ENCODE measurements at regions of chr18 and their contacts with region 1.

Region 1: GRCh38 chr18:23131693-23132319 is 3.5 kb upstream of the CABLES1 start:
- DNase-seq: peak in 1 of 2 donors; percentile 81
- ATAC-seq: peak in 7 of 8 donors; percentile 48 to 76 (median 70)
- H3K4me3 ChIP-seq: no peak overlapping the region
- H3K27ac ChIP-seq: no peak overlapping the region
- H3K4me1 ChIP-seq: peaks cover 4 to 39% (median 16%) of the 10 kb centered on the region in 9 donors
- H3K27me3 ChIP-seq: peaks cover 0 to 48% (median 38%) of the 10 kb centered on the region in 7 donors
- CTCF ChIP-seq: peak; percentile 68 to 89 (median 85)

Region 2: GRCh38 chr18:22609642-22610041 is 522.2 kb before region 1 on chr18:
- intact Hi-C with region 1: no loop called
- DNase-seq: peak; percentile 66 to 86
- ATAC-seq: peak; percentile 47 to 84 (median 63)
- H3K4me3 ChIP-seq: no peak overlapping the region
- H3K27ac ChIP-seq: peak overlapping the region in 9 of 10 donors; percentile 1 to 79 (median 57)
- H3K4me1 ChIP-seq: peaks cover 0 to 60% (median 29%) of the 10 kb centered on the region in 9 donors
- H3K27me3 ChIP-seq: no peaks in the 10 kb centered on the region
- CTCF ChIP-seq: no peak

Region 3: GRCh38 chr18:23020555-23021294 is 111.1 kb before region 1 on chr18:
- intact Hi-C with region 1: no loop called
- DNase-seq: no peak
- ATAC-seq: no peak
- H3K4me3 ChIP-seq: no peak overlapping the region
- H3K27ac ChIP-seq: peak overlapping the region in 1 of 10 donors; percentile 33
- H3K4me1 ChIP-seq: peaks cover 0 to 8% (median 0%) of the 10 kb centered on the region in 9 donors
- H3K27me3 ChIP-seq: no peaks in the 10 kb centered on the region
- CTCF ChIP-seq: no peak

Region 4: DNA sequence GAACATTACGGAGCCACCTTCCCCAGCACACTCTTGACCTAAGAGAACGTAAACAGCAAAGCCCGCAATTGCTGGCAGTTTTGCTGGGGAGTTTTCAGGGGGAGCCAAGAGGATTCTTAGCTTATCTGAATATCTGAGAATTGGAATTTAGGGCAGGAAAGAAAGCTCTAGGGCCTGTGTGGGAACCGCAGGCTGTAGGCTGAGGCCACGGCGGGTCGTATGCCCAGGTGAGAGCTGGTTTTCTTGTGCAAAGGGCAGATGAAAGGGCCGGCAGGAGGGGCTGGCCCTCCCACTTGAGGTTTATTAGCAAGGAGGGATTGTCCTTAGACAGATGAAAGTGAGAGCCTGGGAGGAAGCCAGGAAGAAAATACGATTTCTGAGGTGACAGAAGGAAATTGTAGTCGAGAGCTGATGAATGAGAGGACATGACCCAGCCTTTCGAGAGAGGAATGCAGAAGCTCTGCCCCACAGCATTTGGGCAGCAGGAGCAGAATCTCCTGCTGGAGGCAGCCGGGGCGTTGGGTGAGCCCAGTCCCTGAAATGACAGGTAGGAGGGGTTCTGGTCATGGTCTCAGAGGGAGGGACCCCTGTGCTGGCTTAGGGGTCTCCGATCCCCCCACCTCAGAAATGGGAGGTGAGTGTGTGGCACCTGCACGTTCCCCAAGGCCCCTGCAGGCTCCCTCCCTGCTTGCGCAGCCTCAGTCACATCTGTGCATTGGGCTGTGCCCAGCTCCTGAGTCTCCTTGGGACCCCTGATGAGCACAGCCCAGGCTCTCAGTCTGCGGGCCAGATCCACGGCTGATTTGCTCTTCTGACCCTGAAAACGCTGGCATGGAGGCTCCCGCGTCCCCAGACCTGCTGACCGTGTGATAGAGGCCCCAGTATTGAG is 64.6 kb after region 1 on chr18:
- intact Hi-C with region 1: loop called in 1 of 10 experiments (anchors 5 kb)
- DNase-seq: no peak
- ATAC-seq: no peak
- H3K4me3 ChIP-seq: no peak overlapping the region
- H3K27ac ChIP-seq: peak overlapping the region in 1 of 10 donors; percentile 5
- H3K4me1 ChIP-seq: peaks cover 0 to 32% (median 27%) of the 10 kb centered on the region in 9 donors
- H3K27me3 ChIP-seq: no peaks in the 10 kb centered on the region
- CTCF ChIP-seq: no peak

Region 5: DNA sequence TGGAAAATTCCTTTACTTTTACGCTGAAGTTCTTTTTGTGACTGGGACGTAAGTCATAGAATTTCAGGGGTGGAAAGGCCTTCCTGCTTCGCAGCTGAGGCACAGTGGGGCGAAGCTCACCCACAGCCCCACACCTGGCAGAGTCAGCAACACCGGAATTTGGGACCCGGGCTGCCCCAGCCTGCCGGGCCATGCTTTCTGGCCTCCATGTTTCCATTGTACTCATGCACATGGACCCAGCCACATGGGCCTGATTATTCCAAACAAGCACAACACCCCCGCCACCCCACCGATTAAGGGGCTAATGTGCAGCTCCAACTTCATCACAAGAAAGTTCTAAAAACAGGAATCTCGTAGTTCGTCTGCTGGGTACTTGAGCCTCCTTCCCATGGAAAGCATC is 86.0 kb after region 1 on chr18:
- intact Hi-C with region 1: no loop called
- DNase-seq: no peak
- ATAC-seq: no peak
- H3K4me3 ChIP-seq: no peak overlapping the region
- H3K27ac ChIP-seq: no peak overlapping the region
- H3K4me1 ChIP-seq: peaks cover 0 to 16% (median 5%) of the 10 kb centered on the region in 9 donors
- H3K27me3 ChIP-seq: no peaks in the 10 kb centered on the region
- CTCF ChIP-seq: no peak

Region 6: DNA sequence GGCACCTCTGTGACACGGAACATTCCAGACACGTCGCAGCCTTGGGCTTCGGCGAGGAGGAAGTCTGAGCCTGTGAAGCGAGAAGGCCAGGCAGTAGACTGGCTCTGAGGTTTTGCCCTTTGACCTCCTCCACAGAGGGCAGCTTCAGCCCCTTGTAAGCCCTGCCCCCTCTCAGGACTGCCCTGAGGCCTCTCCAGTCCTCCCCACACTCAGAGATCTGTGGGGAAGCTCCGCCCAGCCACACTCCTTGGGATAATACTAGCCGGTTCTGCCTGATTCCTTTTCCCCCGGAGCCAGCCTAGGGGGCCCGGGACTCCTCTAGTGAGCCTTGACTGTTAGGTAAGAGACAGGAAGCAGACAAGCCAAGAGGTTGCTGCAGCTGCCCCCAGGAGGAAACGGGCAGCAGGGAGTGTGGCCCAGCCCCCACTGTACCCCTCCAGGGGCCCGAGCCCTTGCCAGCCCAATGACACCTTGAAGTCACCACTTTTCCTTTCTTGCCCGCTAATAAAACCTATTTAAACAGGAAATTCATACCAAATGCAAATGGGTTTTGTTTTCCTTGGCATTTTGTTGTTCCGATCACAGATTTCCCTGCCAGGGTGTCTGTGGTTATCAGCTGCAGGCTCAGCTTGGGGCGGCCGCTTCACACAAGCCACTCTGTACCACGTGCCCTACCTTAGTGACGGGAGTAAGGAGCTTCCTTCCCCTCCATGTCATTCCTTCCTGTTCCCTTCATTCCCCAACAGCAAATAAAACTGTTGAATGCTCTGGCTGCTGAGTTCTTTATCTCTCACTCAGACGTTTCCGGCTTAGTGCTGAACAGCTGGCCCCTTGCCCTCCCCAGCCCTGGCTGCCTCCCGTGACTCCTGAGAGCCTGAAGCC is 128.1 kb after region 1 on chr18:
- intact Hi-C with region 1: loop called in 2 of 10 experiments (anchors 5 kb)
- DNase-seq: peak; percentile 80 to 81
- ATAC-seq: peak; percentile 80 to 89 (median 85)
- H3K4me3 ChIP-seq: peak overlapping the region in 9 of 10 donors; percentile 1 to 39 (median 32)
- H3K27ac ChIP-seq: peak overlapping the region; percentile 8 to 86 (median 66)
- H3K4me1 ChIP-seq: peaks cover 10 to 38% (median 26%) of the 10 kb centered on the region in 9 donors
- H3K27me3 ChIP-seq: no peaks in the 10 kb centered on the region
- CTCF ChIP-seq: no peak

Region 7: GRCh38 chr18:23356915-23357601 is 225.3 kb after region 1 on chr18:
- intact Hi-C with region 1: loop called (anchors 1 to 10 kb)
- DNase-seq: no peak
- ATAC-seq: peak in 6 of 8 donors; percentile 12 to 45 (median 29)
- H3K4me3 ChIP-seq: peak overlapping the region in 1 of 10 donors; percentile 38
- H3K27ac ChIP-seq: peak overlapping the region; percentile 18 to 83 (median 70)
- H3K4me1 ChIP-seq: peaks cover 6 to 40% (median 25%) of the 10 kb centered on the region in 9 donors
- H3K27me3 ChIP-seq: no peaks in the 10 kb centered on the region
- CTCF ChIP-seq: no peak

Region 8: GRCh38 chr18:23406271-23406787 is 274.5 kb after region 1 on chr18:
- intact Hi-C with region 1: loop called in 5 of 10 experiments (anchors 1 to 5 kb)
- DNase-seq: no peak
- ATAC-seq: peak in 4 of 8 donors; percentile 42 to 63 (median 52)
- H3K4me3 ChIP-seq: no peak overlapping the region
- H3K27ac ChIP-seq: no peak overlapping the region
- H3K4me1 ChIP-seq: peaks cover 0 to 4% (median 0%) of the 10 kb centered on the region in 9 donors
- H3K27me3 ChIP-seq: no peaks in the 10 kb centered on the region
- CTCF ChIP-seq: no peak

Region 9: GRCh38 chr18:23503038-23503962 is 371.5 kb after region 1 on chr18 and contains the start of gene RMC1:
- intact Hi-C with region 1: loop called in 1 of 10 experiments (anchors 10 kb)
- DNase-seq: peak; percentile 97 to 99
- ATAC-seq: peak; percentile 98 to 99 (median 99)
- H3K4me3 ChIP-seq: peak within 1 kb of the TSS; percentile 85 to 99 (median 96)
- H3K27ac ChIP-seq: peak within 1 kb of the TSS; percentile 57 to 96 (median 94)
- H3K4me1 ChIP-seq: peaks cover 0 to 44% (median 28%) of the 10 kb centered on the region in 9 donors
- H3K27me3 ChIP-seq: no peaks in the 10 kb centered on the region
- CTCF ChIP-seq: peak in 4 of 9 donors; percentile 10 to 33 (median 26)
- total RNA-seq, gene RMC1: 12.4 to 21.6 (median 14.5) TPM

Region 10: GRCh38 chr18:24089076-24089475 is 957.3 kb after region 1 on chr18:
- intact Hi-C with region 1: no loop called
- DNase-seq: peak in 1 of 2 donors; percentile 30
- ATAC-seq: peak; percentile 63 to 97 (median 92)
- H3K4me3 ChIP-seq: no peak overlapping the region
- H3K27ac ChIP-seq: peak overlapping the region; percentile 6 to 81 (median 66)
- H3K4me1 ChIP-seq: peaks cover 2 to 22% (median 17%) of the 10 kb centered on the region in 9 donors
- H3K27me3 ChIP-seq: no peaks in the 10 kb centered on the region
- CTCF ChIP-seq: peak in 1 of 9 donors; percentile 5

Measured in heart right ventricle (tissue), 16 donors.